Heart right ventricle (tissue), 16 donors: ENCODE measurements at regions of chr10 and their contacts with region 1.

Region 1: DNA sequence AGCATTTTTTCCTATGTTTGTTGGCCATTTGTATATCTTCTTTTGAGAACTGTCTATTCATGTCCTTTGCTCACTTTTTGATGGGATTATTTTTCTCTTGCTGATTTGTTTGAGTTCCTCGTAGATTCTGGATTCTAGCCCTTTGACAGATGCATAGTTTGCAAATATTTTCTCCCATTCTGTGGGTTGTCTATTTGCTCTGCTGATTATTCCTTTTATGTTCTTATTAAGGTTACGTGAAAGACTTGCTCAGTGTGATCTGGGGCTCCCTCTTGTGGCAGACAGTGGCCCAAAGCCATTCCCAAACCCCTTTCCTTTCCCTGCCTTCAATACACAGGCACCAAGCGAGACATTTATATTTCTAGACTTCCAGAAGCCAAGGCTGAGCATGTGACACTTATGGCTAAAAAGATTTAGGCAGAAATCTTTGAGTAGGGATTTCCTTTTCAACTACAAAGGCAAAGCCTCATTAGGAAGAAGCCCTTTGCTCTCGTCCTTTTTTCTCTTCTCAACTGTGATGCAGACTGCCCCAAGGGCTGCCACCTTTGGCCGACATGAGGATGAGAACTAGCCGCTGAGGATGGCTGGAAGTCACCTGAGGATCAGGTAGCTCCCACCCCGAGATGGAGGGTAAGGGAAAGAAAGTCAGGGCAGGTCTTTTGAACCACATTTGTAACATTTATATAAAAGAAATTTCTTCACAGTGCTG is 23.6 kb downstream of the ST8SIA6 start:
- DNase-seq: peak; percentile 67 to 82
- ATAC-seq: peak; percentile 64 to 83 (median 70)
- H3K4me3 ChIP-seq: no peak overlapping the region
- H3K27ac ChIP-seq: peak overlapping the region in 1 of 10 donors; percentile 19
- H3K4me1 ChIP-seq: peaks cover 0 to 65% (median 22%) of the 10 kb centered on the region in 9 donors
- H3K27me3 ChIP-seq: peaks cover 0 to 14% (median 8%) of the 10 kb centered on the region in 7 donors
- CTCF ChIP-seq: peak; percentile 74 to 95 (median 91)

Region 2: GRCh38 chr10:15879663-15880062 is 1551.1 kb before region 1 on chr10:
- intact Hi-C with region 1: loop called in 1 of 10 experiments (anchors 10 kb)
- DNase-seq: no peak
- ATAC-seq: no peak
- H3K4me3 ChIP-seq: no peak overlapping the region
- H3K27ac ChIP-seq: no peak overlapping the region
- H3K4me1 ChIP-seq: no peaks in the 10 kb centered on the region
- H3K27me3 ChIP-seq: peaks cover 0 to 35% (median 17%) of the 10 kb centered on the region in 7 donors
- CTCF ChIP-seq: no peak

Region 3: GRCh38 chr10:16828114-16828568 is 602.7 kb before region 1 on chr10:
- intact Hi-C with region 1: loop called in 2 of 10 experiments (anchors 5 kb)
- DNase-seq: peak; percentile 23 to 75
- ATAC-seq: peak; percentile 72 to 90 (median 84)
- H3K4me3 ChIP-seq: peak overlapping the region in 3 of 10 donors; percentile 5 to 17 (median 14)
- H3K27ac ChIP-seq: peak overlapping the region in 9 of 10 donors; percentile 19 to 75 (median 40)
- H3K4me1 ChIP-seq: peaks cover 0 to 41% (median 22%) of the 10 kb centered on the region in 9 donors
- H3K27me3 ChIP-seq: no peaks in the 10 kb centered on the region
- CTCF ChIP-seq: peak; percentile 51 to 76 (median 70)

Region 4: GRCh38 chr10:16843252-16843870 is 587.4 kb before region 1 on chr10:
- intact Hi-C with region 1: loop called in 9 of 10 experiments (anchors 5 to 10 kb)
- DNase-seq: peak in 1 of 2 donors; percentile 17
- ATAC-seq: peak in 6 of 8 donors; percentile 64 to 73 (median 70)
- H3K4me3 ChIP-seq: no peak overlapping the region
- H3K27ac ChIP-seq: no peak overlapping the region
- H3K4me1 ChIP-seq: peaks cover 0 to 28% (median 0%) of the 10 kb centered on the region in 9 donors
- H3K27me3 ChIP-seq: no peaks in the 10 kb centered on the region
- CTCF ChIP-seq: peak; percentile 54 to 80 (median 69)

Region 5: DNA sequence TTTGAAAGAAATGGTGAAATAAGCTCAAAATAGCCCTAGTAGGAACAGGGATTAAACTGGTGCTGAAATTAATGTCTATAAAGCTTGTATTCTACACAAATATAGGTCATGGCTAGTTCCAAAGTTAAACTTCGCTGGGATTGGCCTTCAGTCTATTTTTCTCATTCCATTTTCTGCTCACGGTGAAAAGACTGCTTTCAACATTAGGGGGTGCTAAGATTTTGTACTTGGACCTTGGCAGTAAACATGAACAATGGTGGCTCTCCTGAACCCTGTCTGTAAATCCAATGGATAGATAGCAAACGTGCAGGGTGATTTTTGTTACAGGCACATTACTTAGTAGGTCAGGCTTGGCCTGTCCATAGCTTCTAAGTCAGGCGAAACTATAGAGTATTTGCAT is 577.6 kb before region 1 on chr10:
- intact Hi-C with region 1: loop called in 3 of 10 experiments (anchors 5 to 10 kb)
- DNase-seq: no peak
- ATAC-seq: no peak
- H3K4me3 ChIP-seq: no peak overlapping the region
- H3K27ac ChIP-seq: no peak overlapping the region
- H3K4me1 ChIP-seq: peaks cover 0 to 14% (median 8%) of the 10 kb centered on the region in 9 donors
- H3K27me3 ChIP-seq: no peaks in the 10 kb centered on the region
- CTCF ChIP-seq: peak in 5 of 9 donors; percentile 16 to 45 (median 25)

Region 6: GRCh38 chr10:17290226-17290625 is 140.6 kb before region 1 on chr10:
- intact Hi-C with region 1: loop called in 4 of 10 experiments (anchors 2 to 10 kb)
- DNase-seq: no peak
- ATAC-seq: no peak
- H3K4me3 ChIP-seq: no peak overlapping the region
- H3K27ac ChIP-seq: no peak overlapping the region
- H3K4me1 ChIP-seq: no peaks in the 10 kb centered on the region
- H3K27me3 ChIP-seq: peaks cover 0 to 30% (median 5%) of the 10 kb centered on the region in 7 donors
- CTCF ChIP-seq: peak in 4 of 9 donors; percentile 22 to 44 (median 30)

Region 7: GRCh38 chr10:17348501-17349349 is 82.1 kb before region 1 on chr10:
- intact Hi-C with region 1: loop called in 1 of 10 experiments (anchors 10 kb)
- DNase-seq: peak; percentile 68 to 73
- ATAC-seq: peak; percentile 75 to 98 (median 94)
- H3K4me3 ChIP-seq: peak overlapping the region in 8 of 10 donors; percentile 4 to 39 (median 29)
- H3K27ac ChIP-seq: peak overlapping the region in 9 of 10 donors; percentile 3 to 80 (median 49)
- H3K4me1 ChIP-seq: peaks cover 0 to 23% (median 7%) of the 10 kb centered on the region in 9 donors
- H3K27me3 ChIP-seq: no peaks in the 10 kb centered on the region
- CTCF ChIP-seq: no peak

Region 8: GRCh38 chr10:18044976-18045720 is 614.3 kb after region 1 on chr10:
- intact Hi-C with region 1: no loop called
- DNase-seq: no peak
- ATAC-seq: no peak
- H3K4me3 ChIP-seq: no peak overlapping the region
- H3K27ac ChIP-seq: peak overlapping the region in 1 of 10 donors; percentile 19
- H3K4me1 ChIP-seq: no peaks in the 10 kb centered on the region
- H3K27me3 ChIP-seq: no peaks in the 10 kb centered on the region
- CTCF ChIP-seq: no peak